Transverse colon (tissue), 4 donors: ENCODE measurements at regions of chr22 and their contacts with region 1.

Region 1: GRCh38 chr22:22959147-22959827 is 71.7 kb downstream of the IGLL5 start:
- DNase-seq: peak; percentile 81
- H3K4me3 ChIP-seq: no peak overlapping the region
- H3K27ac ChIP-seq: no peak overlapping the region
- H3K4me1 ChIP-seq: peaks cover 0 to 13% (median 6%) of the 10 kb centered on the region in 4 donors
- H3K27me3 ChIP-seq: peaks cover 22% of the 10 kb centered on the region
- CTCF ChIP-seq: peak; percentile 79 to 93 (median 86)
- EP300 ChIP-seq: no peak
- POLR2A ChIP-seq: no peak

Region 2: GRCh38 chr22:22849640-22850610 is 109.4 kb before region 1 on chr22:
- in situ Hi-C with region 1: loop called in 1 of 4 experiments (anchors 5 kb)
- intact Hi-C with region 1: loop called (anchors 5 kb)
- DNase-seq: no peak
- H3K4me3 ChIP-seq: no peak overlapping the region
- H3K27ac ChIP-seq: no peak overlapping the region
- H3K4me1 ChIP-seq: no peaks in the 10 kb centered on the region
- H3K27me3 ChIP-seq: no peaks in the 10 kb centered on the region
- CTCF ChIP-seq: no peak
- EP300 ChIP-seq: no peak
- POLR2A ChIP-seq: no peak

Region 3: GRCh38 chr22:22939588-22940367 is 19.5 kb before region 1 on chr22:
- in situ Hi-C with region 1: no loop called
- intact Hi-C with region 1: loop called (anchors 1 kb)
- DNase-seq: peak; percentile 10
- H3K4me3 ChIP-seq: no peak overlapping the region
- H3K27ac ChIP-seq: peak overlapping the region in 1 of 4 donors; percentile 26
- H3K4me1 ChIP-seq: no peaks in the 10 kb centered on the region
- H3K27me3 ChIP-seq: no peaks in the 10 kb centered on the region
- CTCF ChIP-seq: no peak
- EP300 ChIP-seq: no peak
- POLR2A ChIP-seq: no peak

Region 4: GRCh38 chr22:23119494-23120414 is 160.5 kb after region 1 on chr22:
- in situ Hi-C with region 1: loop called (anchors 5 to 10 kb)
- intact Hi-C with region 1: no loop called
- DNase-seq: no peak
- H3K4me3 ChIP-seq: no peak overlapping the region
- H3K27ac ChIP-seq: no peak overlapping the region
- H3K4me1 ChIP-seq: no peaks in the 10 kb centered on the region
- H3K27me3 ChIP-seq: no peaks in the 10 kb centered on the region
- CTCF ChIP-seq: no peak
- EP300 ChIP-seq: no peak
- POLR2A ChIP-seq: no peak

Region 5: DNA sequence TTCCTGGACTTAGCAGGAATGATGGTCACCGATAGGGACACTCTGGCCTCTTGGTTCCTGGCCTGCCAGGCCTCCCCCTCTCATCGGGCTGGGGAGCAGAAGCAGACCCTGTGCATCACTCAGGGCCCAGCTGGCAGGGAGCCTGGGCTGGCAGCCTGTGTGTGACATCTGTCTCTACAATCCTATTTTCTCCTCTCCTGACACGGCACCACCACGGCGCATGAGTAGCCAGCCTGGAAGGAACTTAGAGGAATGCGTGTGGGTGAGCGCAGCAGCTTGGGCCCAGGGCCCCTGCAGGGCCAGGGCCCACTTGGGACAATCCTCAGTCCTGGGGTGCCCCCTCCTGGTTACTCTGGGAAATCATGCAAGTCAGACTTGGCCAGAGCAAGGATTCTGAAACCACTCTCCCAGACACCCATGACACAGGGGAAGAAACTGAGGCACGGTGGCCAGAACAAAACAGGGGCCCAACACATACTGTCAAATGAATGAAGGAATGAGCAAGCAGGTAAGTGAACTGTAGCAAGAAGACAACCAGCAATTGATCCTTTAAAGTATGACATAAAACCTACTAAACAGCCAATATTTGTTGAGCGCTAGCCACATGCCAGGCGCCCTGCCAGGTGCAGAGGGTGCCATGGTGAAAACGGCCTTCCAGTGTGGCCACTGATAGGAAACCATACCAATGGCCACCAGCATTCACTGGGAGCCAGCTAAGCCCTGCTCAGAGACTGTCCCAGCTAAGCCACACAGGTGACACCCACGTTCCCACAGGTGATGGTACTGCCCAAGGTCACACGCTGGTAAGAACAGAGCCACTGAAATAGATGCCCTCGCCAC is 169.2 kb after region 1 on chr22:
- in situ Hi-C with region 1: loop called (anchors 5 to 10 kb)
- intact Hi-C with region 1: loop called (anchors 1 kb)
- DNase-seq: peak; percentile 79
- H3K4me3 ChIP-seq: no peak overlapping the region
- H3K27ac ChIP-seq: no peak overlapping the region
- H3K4me1 ChIP-seq: peaks cover 0 to 3% (median 0%) of the 10 kb centered on the region in 4 donors
- H3K27me3 ChIP-seq: no peaks in the 10 kb centered on the region
- CTCF ChIP-seq: peak; percentile 72 to 83 (median 78)
- EP300 ChIP-seq: no peak
- POLR2A ChIP-seq: no peak

Region 6: GRCh38 chr22:23281406-23282088 is 322.3 kb after region 1 on chr22:
- in situ Hi-C with region 1: loop called in 3 of 4 experiments (anchors 25 kb)
- intact Hi-C with region 1: no loop called
- DNase-seq: peak; percentile 88
- H3K4me3 ChIP-seq: no peak overlapping the region
- H3K27ac ChIP-seq: peak overlapping the region; percentile 42 to 86 (median 66)
- H3K4me1 ChIP-seq: peaks cover 18 to 37% (median 24%) of the 10 kb centered on the region in 4 donors
- H3K27me3 ChIP-seq: no peaks in the 10 kb centered on the region
- CTCF ChIP-seq: peak; percentile 91 to 97 (median 93)
- EP300 ChIP-seq: no peak
- POLR2A ChIP-seq: no peak

Region 7: GRCh38 chr22:23385291-23386244 is 426.3 kb after region 1 on chr22:
- in situ Hi-C with region 1: loop called in 2 of 4 experiments (anchors 25 kb)
- intact Hi-C with region 1: no loop called
- DNase-seq: peak; percentile 88
- H3K4me3 ChIP-seq: no peak overlapping the region
- H3K27ac ChIP-seq: no peak overlapping the region
- H3K4me1 ChIP-seq: peaks cover 0 to 9% (median 0%) of the 10 kb centered on the region in 4 donors
- H3K27me3 ChIP-seq: no peaks in the 10 kb centered on the region
- CTCF ChIP-seq: peak; percentile 99 to 100 (median 99)
- EP300 ChIP-seq: no peak
- POLR2A ChIP-seq: no peak